Mammary epithelial cell (primary cell): ENCODE measurements at regions of chr11 and their contacts with region 1.

Region 1: GRCh38 chr11:35617687-35618496 is at the start of gene FJX1:
- DNase-seq: peak; percentile 90
- H3K4me3 ChIP-seq: peak within 1 kb of the TSS; percentile 73 to 91 (median 81)
- H3K27ac ChIP-seq: peak within 1 kb of the TSS; percentile 80
- H3K4me1 ChIP-seq: peaks cover 54% of the 10 kb centered on the region
- H3K27me3 ChIP-seq: no peaks in the 10 kb centered on the region
- CTCF ChIP-seq: no peak
- total RNA-seq, gene FJX1: 38.5 to 53.8 TPM

Region 2: GRCh38 chr11:35485656-35486322 is 132.1 kb before region 1 on chr11:
- CTCF ChIA-PET with region 1: interaction called, 3 read pairs
- dilution Hi-C with region 1: no loop called
- in situ Hi-C with region 1: no loop called
- intact Hi-C with region 1: loop called (anchors 1 kb)
- DNase-seq: peak; percentile 58
- H3K4me3 ChIP-seq: no peak overlapping the region
- H3K27ac ChIP-seq: no peak overlapping the region
- H3K4me1 ChIP-seq: no peaks in the 10 kb centered on the region
- H3K27me3 ChIP-seq: no peaks in the 10 kb centered on the region
- CTCF ChIP-seq: peak; percentile 93 to 94

Region 3: GRCh38 chr11:35683728-35684339 is 65.9 kb after region 1 on chr11:
- CTCF ChIA-PET with region 1: no interaction called
- dilution Hi-C with region 1: no loop called
- in situ Hi-C with region 1: no loop called
- intact Hi-C with region 1: loop called (anchors 5 kb)
- DNase-seq: peak; percentile 36
- H3K4me3 ChIP-seq: no peak overlapping the region
- H3K27ac ChIP-seq: no peak overlapping the region
- H3K4me1 ChIP-seq: peaks cover 3% of the 10 kb centered on the region
- H3K27me3 ChIP-seq: no peaks in the 10 kb centered on the region
- CTCF ChIP-seq: no peak

Region 4: GRCh38 chr11:35815556-35816315 is 197.8 kb after region 1 on chr11:
- CTCF ChIA-PET with region 1: no interaction called
- dilution Hi-C with region 1: no loop called
- in situ Hi-C with region 1: loop called (anchors 10 to 25 kb)
- intact Hi-C with region 1: no loop called
- DNase-seq: no peak
- H3K4me3 ChIP-seq: no peak overlapping the region
- H3K27ac ChIP-seq: no peak overlapping the region
- H3K4me1 ChIP-seq: peaks cover 9% of the 10 kb centered on the region
- H3K27me3 ChIP-seq: no peaks in the 10 kb centered on the region
- CTCF ChIP-seq: no peak

Region 5: DNA sequence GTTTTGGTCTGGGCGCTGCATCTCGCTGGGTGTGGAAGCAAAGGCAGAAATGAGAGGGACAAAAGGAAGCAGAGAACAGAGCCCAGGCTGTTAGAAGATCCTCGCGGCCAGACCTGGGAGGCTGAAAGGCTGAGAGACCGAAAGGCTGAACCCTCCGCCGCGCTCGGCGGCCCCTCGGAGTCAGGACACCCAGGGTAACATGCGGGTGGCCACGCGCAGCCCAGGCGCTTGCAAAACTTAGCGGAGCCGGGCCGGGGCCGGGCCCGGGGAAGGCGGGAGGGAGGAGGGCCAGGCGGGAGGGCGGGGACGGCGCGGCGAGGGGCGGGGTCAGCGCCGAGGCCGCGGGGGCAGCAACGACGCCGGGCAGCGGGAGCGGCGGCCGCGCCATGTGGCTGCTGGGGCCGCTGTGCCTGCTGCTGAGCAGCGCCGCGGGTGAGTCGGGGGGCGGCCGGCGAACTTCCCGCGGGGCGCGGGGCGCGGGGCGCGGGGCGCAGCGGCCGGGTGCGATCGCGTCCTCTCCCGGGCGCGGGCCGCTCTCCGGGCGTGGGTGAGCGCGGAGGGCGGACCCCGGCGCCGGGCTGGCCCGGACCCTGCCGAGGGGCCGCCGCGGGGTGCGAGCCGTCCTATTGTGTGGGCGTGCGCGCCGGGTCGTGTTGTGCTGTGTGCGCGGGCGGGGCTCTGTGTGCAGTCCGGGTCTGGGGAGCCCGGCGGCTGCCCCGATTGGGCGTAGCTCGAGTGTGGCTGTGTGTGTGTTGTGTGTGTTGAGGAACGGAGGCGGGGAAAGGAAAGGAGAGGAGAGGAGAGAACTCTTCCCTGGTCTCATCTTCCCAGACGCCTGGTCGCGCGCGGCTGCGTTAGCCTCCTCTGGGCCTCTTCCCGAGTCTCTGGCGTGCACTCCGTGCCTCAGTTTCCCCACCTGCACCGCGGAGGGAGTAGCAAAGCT is 326.1 kb after region 1 on chr11 and contains the start of gene LDLRAD3:
- CTCF ChIA-PET with region 1: no interaction called
- dilution Hi-C with region 1: no loop called
- in situ Hi-C with region 1: no loop called
- intact Hi-C with region 1: loop called (anchors 1 kb)
- DNase-seq: peak; percentile 76
- H3K4me3 ChIP-seq: peak within 1 kb of the TSS; percentile 77 to 93 (median 81)
- H3K27ac ChIP-seq: peak within 1 kb of the TSS; percentile 52
- H3K4me1 ChIP-seq: peaks cover 17% of the 10 kb centered on the region
- H3K27me3 ChIP-seq: no peaks in the 10 kb centered on the region
- CTCF ChIP-seq: no peak
- total RNA-seq, gene LDLRAD3: 15.3 to 18.4 TPM

Region 6: GRCh38 chr11:36149538-36150242 is 531.8 kb after region 1 on chr11:
- CTCF ChIA-PET with region 1: no interaction called
- dilution Hi-C with region 1: no loop called
- in situ Hi-C with region 1: no loop called
- intact Hi-C with region 1: loop called (anchors 1 kb)
- DNase-seq: peak; percentile 100
- H3K4me3 ChIP-seq: no peak overlapping the region
- H3K27ac ChIP-seq: peak overlapping the region; percentile 67
- H3K4me1 ChIP-seq: peaks cover 43% of the 10 kb centered on the region
- H3K27me3 ChIP-seq: no peaks in the 10 kb centered on the region
- CTCF ChIP-seq: peak; percentile 63 to 76

Region 7: GRCh38 chr11:36278531-36279282 is 660.8 kb after region 1 on chr11:
- CTCF ChIA-PET with region 1: no interaction called
- dilution Hi-C with region 1: no loop called
- in situ Hi-C with region 1: loop called in 1 of 2 experiments (anchors 10 kb)
- intact Hi-C with region 1: no loop called
- DNase-seq: no peak
- H3K4me3 ChIP-seq: no peak overlapping the region
- H3K27ac ChIP-seq: no peak overlapping the region
- H3K4me1 ChIP-seq: peaks cover 18% of the 10 kb centered on the region
- H3K27me3 ChIP-seq: no peaks in the 10 kb centered on the region
- CTCF ChIP-seq: no peak